ENCODE measurements at regions of chr3 and their contacts with region 1.

Region 1: GRCh38 chr3:71305231-71306206 is 278.0 kb downstream of the FOXP1 start:
- DNase-seq: no peak

Region 2: DNA sequence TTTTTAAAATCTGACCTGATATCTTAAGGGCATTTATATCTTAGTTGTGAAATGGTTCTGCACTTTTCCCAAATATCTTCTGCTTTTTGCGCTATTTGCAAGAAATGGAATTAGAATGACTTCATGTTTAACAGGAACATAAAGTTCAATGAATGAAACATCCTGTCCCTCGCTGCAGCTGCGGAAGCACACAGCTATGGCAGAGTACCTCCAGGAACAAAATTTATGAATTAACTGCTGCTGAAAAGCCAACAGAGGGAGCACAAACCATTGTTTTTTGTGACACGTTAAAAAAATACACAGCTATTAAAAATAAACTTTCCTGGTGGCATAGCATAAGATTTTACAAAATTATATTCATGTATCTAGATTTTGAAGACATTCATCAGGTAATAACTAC is 588.7 kb before region 1 on chr3:
- intact Hi-C with region 1: loop called (anchors 5 kb)
- DNase-seq: no peak

Region 3: DNA sequence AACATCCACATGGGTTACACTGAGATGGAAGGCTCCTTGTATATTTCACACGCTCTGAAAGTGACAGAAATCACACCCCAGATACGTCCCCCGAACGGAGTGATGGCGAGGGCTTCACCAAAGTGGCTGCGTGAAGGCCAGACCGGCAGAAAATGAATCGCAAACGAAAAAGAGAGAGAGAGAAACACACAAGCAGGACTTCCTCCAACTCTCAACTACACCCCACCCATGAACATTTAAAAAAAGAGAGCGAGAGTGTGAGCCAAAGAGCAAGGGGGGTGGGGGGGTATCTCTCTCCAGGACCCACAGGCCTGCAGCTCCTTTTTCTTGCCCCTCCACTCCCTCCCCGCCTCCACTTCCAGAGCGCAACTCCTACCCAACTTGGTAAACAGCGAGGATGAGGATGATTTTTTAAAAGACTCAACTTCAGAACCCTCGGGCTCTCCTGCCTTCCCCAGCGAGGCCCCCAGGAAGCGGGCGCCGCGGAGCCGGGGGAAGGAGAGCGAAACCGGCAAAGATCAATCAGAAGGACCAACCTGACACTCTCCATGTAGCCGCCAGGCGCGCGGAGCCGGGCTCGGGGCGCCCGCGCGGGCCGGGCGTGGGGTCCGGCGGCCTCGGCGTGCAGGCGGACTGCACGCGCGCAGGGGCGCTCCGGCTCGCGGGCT is 241.1 kb before region 1 on chr3:
- intact Hi-C with region 1: loop called (anchors 2 kb)
- DNase-seq: no peak

Region 4: GRCh38 chr3:71172951-71173350 is 132.6 kb before region 1 on chr3:
- intact Hi-C with region 1: loop called (anchors 5 kb)
- DNase-seq: no peak

Region 5: DNA sequence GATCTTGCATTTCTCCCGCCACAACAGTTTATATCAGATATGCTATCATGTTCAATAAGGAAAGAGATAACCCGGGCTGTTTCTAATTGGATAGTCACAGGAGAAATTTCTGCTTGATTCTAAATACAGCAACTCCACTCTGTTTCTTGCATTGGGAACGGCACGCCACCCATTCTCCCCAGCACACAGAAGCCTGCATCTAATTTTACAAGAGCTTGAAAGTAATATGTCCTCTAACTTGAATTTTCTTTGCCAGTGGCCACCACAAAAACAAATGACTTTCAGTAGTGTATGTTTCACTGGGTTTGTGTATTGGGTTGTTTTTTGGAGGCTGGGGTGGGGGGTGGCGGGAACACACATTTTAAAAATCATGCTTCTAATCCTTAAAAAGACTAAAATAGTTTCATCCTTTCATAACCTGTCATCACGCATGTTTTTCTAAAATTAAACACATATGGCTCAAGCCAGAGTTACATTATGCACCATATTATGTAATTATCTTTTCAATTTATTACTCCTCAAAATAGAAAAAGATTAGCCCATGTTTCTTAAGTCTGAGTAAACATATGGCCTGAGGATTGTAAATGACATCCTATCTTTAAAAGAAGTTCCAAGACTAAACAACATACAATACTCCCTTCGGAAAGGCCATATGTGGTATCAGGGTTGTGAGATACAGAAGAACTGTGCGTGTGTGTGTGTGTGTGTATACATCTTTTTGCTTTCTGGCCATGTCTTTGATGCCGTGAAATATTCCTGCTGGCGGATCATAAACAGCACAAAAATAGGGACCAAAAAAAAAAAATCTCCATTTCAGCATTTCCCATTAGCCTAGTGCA is 101.7 kb after region 1 on chr3:
- intact Hi-C with region 1: loop called (anchors 10 kb)
- DNase-seq: no peak